ENCODE measurements at regions of chr3 and their contacts with region 1.

Region 1: GRCh38 chr3:141303481-141304223 is 64.7 kb upstream of the ZBTB38 start:
- DNase-seq: peak; percentile 73
- H3K4me3 ChIP-seq: no peak overlapping the region
- H3K27ac ChIP-seq: no peak overlapping the region
- H3K4me1 ChIP-seq: peaks cover 4% of the 10 kb centered on the region
- H3K27me3 ChIP-seq: no peaks in the 10 kb centered on the region
- CTCF ChIP-seq: peak; percentile 76 to 99 (median 80)
- POLR2A ChIP-seq: no peak

Region 2: DNA sequence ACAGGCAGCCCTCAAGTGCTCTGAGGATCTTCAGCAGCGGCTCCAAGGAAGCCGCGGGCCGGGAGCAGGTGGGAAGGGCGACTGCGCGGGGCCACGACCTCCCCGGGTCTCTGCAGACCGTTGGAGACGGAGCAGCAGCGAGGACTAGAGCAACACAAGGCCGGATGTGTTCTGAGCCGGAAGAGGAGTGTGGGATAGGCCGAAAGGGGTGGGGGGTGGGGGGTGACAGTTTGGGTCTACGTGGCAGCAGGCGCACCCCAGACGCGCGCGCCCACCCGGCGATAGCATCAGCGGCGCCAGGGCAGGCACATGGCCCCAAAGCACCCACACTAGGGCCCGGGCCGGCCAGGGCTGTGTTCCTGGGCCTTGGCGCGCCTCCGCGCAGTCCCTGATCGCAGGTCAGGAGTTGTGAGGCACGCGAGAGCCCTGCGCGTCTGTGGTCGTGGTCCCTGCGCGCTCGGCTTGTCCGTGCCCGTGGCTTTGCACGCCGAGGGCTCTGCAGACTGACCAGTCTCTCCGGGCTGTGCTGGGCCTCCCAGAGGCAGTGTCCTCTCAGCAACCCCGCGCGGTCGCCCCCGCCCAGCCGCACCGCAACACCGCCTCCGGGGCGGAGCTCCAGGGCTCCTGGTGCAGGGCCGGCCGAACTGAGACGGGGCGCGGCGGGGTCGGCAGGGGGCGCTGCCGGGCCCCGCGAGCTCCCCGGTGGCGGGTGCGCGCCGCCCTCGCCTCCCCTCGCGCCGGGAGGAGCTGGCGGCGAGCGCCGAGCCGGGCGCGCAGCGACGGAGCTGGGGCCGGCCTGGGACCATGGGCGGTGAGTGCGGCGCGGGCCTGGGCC is 72.3 kb before region 1 on chr3 and contains the start of gene PXYLP1:
- intact Hi-C with region 1: loop called (anchors 10 kb)
- DNase-seq: peak; percentile 92
- H3K4me3 ChIP-seq: peak within 1 kb of the TSS; percentile 75 to 80
- H3K27ac ChIP-seq: peak within 1 kb of the TSS; percentile 50 to 79
- H3K4me1 ChIP-seq: peaks cover 7% of the 10 kb centered on the region
- H3K27me3 ChIP-seq: no peaks in the 10 kb centered on the region
- CTCF ChIP-seq: peak; percentile 58 to 87 (median 76)
- POLR2A ChIP-seq: no peak
- total RNA-seq, gene PXYLP1: 16.0 to 31.6 TPM

Region 3: GRCh38 chr3:141360888-141361598 is 57.4 kb after region 1 on chr3:
- intact Hi-C with region 1: no loop called
- DNase-seq: no peak
- H3K4me3 ChIP-seq: no peak overlapping the region
- H3K27ac ChIP-seq: peak overlapping the region in 1 of 2 donors; percentile 28
- H3K4me1 ChIP-seq: peaks cover 2% of the 10 kb centered on the region
- H3K27me3 ChIP-seq: no peaks in the 10 kb centered on the region
- CTCF ChIP-seq: peak; percentile 65 to 74 (median 73)
- POLR2A ChIP-seq: no peak

Region 4: DNA sequence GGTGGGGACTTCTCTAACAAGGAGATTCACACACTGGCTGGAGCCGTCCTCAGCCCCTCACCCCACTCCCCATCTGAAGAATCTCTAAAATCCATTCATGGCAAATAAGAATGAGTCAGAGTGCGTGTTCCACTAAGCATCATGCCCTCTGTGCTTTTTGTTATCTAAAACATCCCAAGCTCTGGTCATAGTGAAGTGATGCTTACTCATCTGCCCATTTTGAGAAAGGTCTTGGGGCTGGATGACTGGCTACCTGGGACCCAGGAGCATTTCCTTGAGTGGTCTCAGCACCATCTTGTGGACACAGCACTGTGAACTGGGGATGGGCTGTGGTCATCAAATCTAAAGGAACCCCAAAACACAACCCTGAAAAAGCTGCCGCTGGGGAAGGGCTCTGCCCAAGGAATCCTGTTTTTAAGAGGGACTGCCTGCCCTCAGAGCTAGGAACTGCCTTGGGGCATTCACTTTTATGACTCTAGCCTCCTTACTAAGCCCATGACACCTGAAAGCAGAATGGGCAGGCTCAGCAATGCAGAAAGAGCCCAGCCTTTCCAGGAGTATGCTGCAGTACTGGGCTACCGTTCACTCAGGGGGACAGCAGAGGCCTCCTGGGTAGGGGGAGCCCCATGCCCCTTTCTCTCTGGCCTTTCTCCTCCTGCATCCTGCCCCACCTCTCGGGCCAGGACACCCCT is 118.1 kb after region 1 on chr3:
- intact Hi-C with region 1: no loop called
- DNase-seq: no peak
- H3K4me3 ChIP-seq: no peak overlapping the region
- H3K27ac ChIP-seq: peak overlapping the region; percentile 0 to 20
- H3K4me1 ChIP-seq: peaks cover 14% of the 10 kb centered on the region
- H3K27me3 ChIP-seq: no peaks in the 10 kb centered on the region
- CTCF ChIP-seq: no peak
- POLR2A ChIP-seq: no peak

Region 5: GRCh38 chr3:141460097-141460704 is 156.5 kb after region 1 on chr3:
- intact Hi-C with region 1: loop called (anchors 10 kb)
- DNase-seq: peak; percentile 92
- H3K4me3 ChIP-seq: no peak overlapping the region
- H3K27ac ChIP-seq: no peak overlapping the region
- H3K4me1 ChIP-seq: no peaks in the 10 kb centered on the region
- H3K27me3 ChIP-seq: no peaks in the 10 kb centered on the region
- CTCF ChIP-seq: peak; percentile 37 to 70 (median 63)
- POLR2A ChIP-seq: no peak

Measured in testis (tissue), 5 donors.